Heart left ventricle (tissue), 16 donors: ENCODE measurements at regions of chr14 and their contacts with region 1.

Region 1: GRCh38 chr14:80954687-80955299 is 628 bp upstream of the TSHR start:
- DNase-seq: peak; percentile 70 to 88 (median 76)
- ATAC-seq: peak; percentile 76 to 97 (median 92)
- H3K4me3 ChIP-seq: peak overlapping the region; percentile 16 to 67 (median 54)
- H3K27ac ChIP-seq: no peak overlapping the region
- H3K4me1 ChIP-seq: peaks cover 0 to 23% (median 3%) of the 10 kb centered on the region in 12 donors
- H3K27me3 ChIP-seq: peaks cover 0 to 14% (median 3%) of the 10 kb centered on the region in 9 donors
- CTCF ChIP-seq: peak; percentile 69 to 89 (median 79)
- POLR2A ChIP-seq: no peak

Region 2: GRCh38 chr14:80987235-80988032 is 32.6 kb after region 1 on chr14:
- intact Hi-C with region 1: loop called (anchors 1 to 5 kb)
- DNase-seq: peak in 4 of 5 donors; percentile 43 to 52 (median 48)
- ATAC-seq: peak in 3 of 4 donors; percentile 61 to 80 (median 66)
- H3K4me3 ChIP-seq: no peak overlapping the region
- H3K27ac ChIP-seq: no peak overlapping the region
- H3K4me1 ChIP-seq: no peaks in the 10 kb centered on the region
- H3K27me3 ChIP-seq: peaks cover 0 to 30% (median 2%) of the 10 kb centered on the region in 9 donors
- CTCF ChIP-seq: peak; percentile 84 to 96 (median 92)
- POLR2A ChIP-seq: no peak

Region 3: GRCh38 chr14:81170104-81170828 is 215.5 kb after region 1 on chr14:
- intact Hi-C with region 1: loop called in 8 of 10 experiments (anchors 2 to 10 kb)
- DNase-seq: peak; percentile 92 to 97 (median 96)
- ATAC-seq: peak; percentile 99 to 100 (median 100)
- H3K4me3 ChIP-seq: peak overlapping the region; percentile 57 to 87 (median 72)
- H3K27ac ChIP-seq: peak overlapping the region; percentile 82 to 97 (median 93)
- H3K4me1 ChIP-seq: peaks cover 0 to 19% (median 8%) of the 10 kb centered on the region in 12 donors
- H3K27me3 ChIP-seq: no peaks in the 10 kb centered on the region
- CTCF ChIP-seq: peak; percentile 82 to 95 (median 90)
- POLR2A ChIP-seq: peak in 1 of 2 donors; percentile 68

Region 4: DNA sequence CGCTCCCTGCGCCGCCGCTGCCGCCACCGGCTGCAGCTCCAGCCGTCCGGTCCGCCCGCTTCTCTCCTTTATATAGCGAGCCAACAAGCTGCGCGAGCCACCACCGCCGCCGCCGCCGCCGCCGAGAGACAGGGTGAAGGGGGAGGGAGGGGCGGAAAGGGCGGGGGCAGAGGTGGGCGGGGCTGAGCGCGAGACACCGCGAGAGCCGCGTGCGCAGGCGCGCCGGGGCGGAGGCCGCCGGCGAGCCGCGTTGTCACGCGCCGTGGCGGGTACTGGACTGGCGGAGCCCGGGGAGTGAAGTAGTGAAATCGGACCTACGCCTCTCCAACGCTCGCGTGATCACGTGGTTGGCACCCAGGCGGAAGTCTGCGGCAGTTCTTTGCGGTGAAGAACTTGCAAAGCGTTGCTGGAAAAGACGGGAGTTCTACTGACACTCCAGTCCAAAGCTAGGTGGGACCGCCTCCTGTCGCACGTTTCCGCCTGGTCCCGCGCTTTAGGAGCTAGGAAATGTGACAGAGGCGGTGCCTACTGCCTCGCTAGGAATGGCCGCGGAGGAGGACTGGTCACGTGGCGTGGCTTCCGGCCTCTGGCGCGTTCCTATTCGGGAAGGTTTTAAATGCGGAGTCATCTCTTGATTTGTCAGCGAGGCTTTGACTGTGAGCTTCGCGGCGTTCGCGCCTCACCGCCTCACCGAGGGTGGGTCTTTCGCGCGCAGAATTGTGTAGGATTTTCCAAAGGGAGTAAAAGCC is 266.2 kb after region 1 on chr14 and contains the start of gene GTF2A1:
- intact Hi-C with region 1: loop called in 1 of 10 experiments (anchors 5 kb)
- DNase-seq: peak; percentile 95 to 98 (median 97)
- ATAC-seq: peak; percentile 86 to 95 (median 90)
- H3K4me3 ChIP-seq: peak within 1 kb of the TSS; percentile 80 to 91 (median 86)
- H3K27ac ChIP-seq: peak within 1 kb of the TSS; percentile 95 to 100 (median 98)
- H3K4me1 ChIP-seq: peaks cover 0 to 34% (median 25%) of the 10 kb centered on the region in 12 donors
- H3K27me3 ChIP-seq: no peaks in the 10 kb centered on the region
- CTCF ChIP-seq: peak in 1 of 12 donors; percentile 4
- POLR2A ChIP-seq: peak; percentile 88 to 95
- total RNA-seq, gene GTF2A1: 12.7 to 31.3 (median 23.3) TPM

Region 5: DNA sequence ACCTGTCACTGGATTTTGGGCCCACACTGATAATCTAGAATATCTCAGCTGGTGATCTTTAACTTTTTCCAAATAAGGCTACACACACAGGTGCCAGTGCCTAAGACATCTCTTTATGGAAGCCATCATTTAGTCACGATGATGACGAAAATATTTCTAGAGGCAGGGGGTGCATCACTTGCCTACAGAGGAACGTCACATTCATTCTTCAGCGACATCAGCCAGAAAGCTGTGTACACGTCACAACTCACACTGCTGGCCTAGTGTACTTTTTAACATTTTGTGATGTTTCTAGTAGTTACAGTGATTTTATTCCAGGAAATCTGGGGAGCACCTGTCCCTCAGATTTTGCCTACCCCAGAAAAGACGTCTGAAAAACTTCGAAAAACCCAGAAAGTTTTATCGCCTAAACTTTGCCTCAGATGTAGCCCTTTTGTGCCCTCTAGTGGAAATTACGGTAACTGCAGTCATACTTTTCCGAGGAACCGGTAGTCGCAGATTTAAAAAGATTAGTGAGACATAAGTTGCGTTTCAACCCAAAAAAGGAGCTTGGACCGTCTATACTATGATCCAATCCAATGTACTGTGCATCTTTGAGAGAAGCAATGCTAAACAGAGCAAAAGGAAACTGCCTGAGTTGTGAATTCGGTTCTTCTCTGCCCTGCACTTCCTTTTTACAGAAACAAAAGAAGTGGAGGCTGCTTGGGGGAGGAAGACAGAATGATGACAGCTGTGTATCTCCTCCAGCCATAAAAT is 509.6 kb after region 1 on chr14:
- intact Hi-C with region 1: loop called in 5 of 10 experiments (anchors 5 to 10 kb)
- DNase-seq: peak in 2 of 5 donors; percentile 35 to 53
- ATAC-seq: peak in 3 of 4 donors; percentile 38 to 58 (median 53)
- H3K4me3 ChIP-seq: peak overlapping the region in 11 of 12 donors; percentile 32 to 64 (median 49)
- H3K27ac ChIP-seq: peak overlapping the region in 5 of 12 donors; percentile 13 to 76 (median 23)
- H3K4me1 ChIP-seq: peaks cover 0 to 7% (median 0%) of the 10 kb centered on the region in 12 donors
- H3K27me3 ChIP-seq: no peaks in the 10 kb centered on the region
- CTCF ChIP-seq: peak; percentile 84 to 94 (median 92)
- POLR2A ChIP-seq: no peak